ENCODE measurements at regions of chr1 and their contacts with region 1.

Region 1: DNA sequence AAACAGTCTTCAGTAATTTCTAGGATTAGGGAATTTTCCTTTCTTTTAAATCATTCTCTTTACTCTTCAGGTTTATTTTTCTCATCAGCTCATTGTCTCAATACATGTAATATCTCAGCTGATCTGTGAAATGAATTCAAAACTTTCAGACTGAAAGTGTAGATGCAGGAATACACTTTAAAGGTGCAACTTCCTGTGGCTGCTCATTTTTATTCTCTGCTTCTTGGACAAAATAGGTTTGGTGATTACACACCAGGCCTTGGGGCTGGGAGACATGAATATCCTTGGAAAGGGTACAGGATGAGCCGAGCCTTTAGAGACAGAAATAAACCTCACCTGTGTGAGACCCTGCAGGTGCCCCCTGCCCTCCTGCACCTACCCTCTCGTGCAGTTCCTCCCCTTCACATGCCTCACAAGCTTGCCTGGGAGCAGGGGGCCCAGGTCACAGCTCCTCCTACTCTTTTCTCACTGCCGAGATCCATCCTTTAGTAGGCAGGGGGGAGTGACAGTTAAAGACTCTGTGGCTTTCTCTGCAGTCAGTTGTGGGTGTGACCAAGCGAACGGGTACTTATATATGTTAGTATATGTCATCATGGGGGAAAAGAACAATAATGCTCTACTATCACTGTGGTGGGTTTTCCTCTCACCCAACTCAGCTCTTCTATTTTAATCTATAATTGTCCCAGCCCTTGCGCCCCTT is 23.6 kb downstream of the XCL2 start:
- DNase-seq: no peak
- H3K4me3 Mint-ChIP-seq: peak overlapping the region; percentile 55
- H3K27ac Mint-ChIP-seq: peak overlapping the region; percentile 81
- H3K4me1 Mint-ChIP-seq: peaks cover 57% of the 10 kb centered on the region
- H3K27me3 Mint-ChIP-seq: no peaks in the 10 kb centered on the region

Region 2: DNA sequence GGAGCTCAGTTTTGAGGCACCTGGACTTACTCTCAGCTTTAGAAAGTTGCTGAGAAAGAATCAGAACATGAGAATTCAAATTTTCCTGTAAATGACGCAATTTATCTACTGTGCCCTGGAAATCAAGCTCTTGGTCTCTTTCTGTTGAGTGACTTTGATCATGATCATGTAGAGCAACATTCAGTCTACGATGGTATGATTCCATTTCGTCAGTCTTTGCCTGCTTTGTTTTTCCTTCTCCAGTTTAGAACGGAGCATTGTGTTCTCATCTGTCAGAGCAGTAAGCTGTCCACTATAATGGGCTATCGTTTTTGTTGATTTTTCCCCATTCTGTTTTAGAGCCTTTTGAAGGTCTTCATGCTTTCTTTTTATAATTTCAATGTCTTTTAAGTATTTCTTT is 273.7 kb before region 1 on chr1:
- intact Hi-C with region 1: no loop called
- DNase-seq: no peak
- H3K4me3 Mint-ChIP-seq: no peak overlapping the region
- H3K27ac Mint-ChIP-seq: no peak overlapping the region
- H3K4me1 Mint-ChIP-seq: peaks cover 50% of the 10 kb centered on the region
- H3K27me3 Mint-ChIP-seq: no peaks in the 10 kb centered on the region

Region 3: GRCh38 chr1:168483539-168483938 is 36.7 kb before region 1 on chr1:
- intact Hi-C with region 1: loop called (anchors 5 kb)
- DNase-seq: no peak
- H3K4me3 Mint-ChIP-seq: no peak overlapping the region
- H3K27ac Mint-ChIP-seq: no peak overlapping the region
- H3K4me1 Mint-ChIP-seq: peaks cover 45% of the 10 kb centered on the region
- H3K27me3 Mint-ChIP-seq: no peaks in the 10 kb centered on the region

Region 4: GRCh38 chr1:168509875-168510791 is 10.1 kb before region 1 on chr1:
- intact Hi-C with region 1: loop called (anchors 1 kb)
- DNase-seq: peak; percentile 27
- H3K4me3 Mint-ChIP-seq: no peak overlapping the region
- H3K27ac Mint-ChIP-seq: peak overlapping the region; percentile 77
- H3K4me1 Mint-ChIP-seq: peaks cover 82% of the 10 kb centered on the region
- H3K27me3 Mint-ChIP-seq: peaks cover 1% of the 10 kb centered on the region

Region 5: DNA sequence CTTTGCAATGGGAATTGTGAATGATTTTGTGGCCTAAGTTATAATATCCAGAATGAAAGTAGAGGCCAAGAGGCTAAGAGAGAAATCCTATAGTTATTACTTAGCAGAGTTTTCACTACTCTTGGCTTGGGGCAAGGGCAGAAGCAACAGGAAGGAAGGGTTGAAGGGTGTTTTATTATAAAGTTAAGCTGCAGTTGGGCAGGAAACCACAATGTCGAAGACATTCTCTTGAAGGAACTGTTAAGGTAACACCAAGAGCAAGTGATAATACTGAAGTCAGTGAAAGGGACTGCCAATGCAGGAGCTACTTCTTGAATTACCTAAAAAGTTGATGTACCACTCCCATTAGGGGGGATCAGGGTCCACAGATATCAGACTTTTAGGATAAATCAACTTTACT is 15.3 kb after region 1 on chr1:
- intact Hi-C with region 1: loop called (anchors 2 kb)
- DNase-seq: peak; percentile 22
- H3K4me3 Mint-ChIP-seq: peak overlapping the region; percentile 69
- H3K27ac Mint-ChIP-seq: peak overlapping the region; percentile 63
- H3K4me1 Mint-ChIP-seq: peaks cover 55% of the 10 kb centered on the region
- H3K27me3 Mint-ChIP-seq: peaks cover 4% of the 10 kb centered on the region

Measured in activated T-helper 1 cell treated with anti-CD3 and anti-CD28 coated beads, Interleukin-12 subunit alpha, Interleukin-12 subunit beta, Interleukin-2, Interleukin-4 antibody, amounts not matched to agents 30 ng/mL and 10 ng/mL and 1 ng/mL, durations not matched to agents 14 hours and 24 hours and 36 hours (primary cell).